Naive thymus-derived CD4-positive, alpha-beta T cell (primary cell): ENCODE measurements at regions of chr7 and their contacts with region 1.

Region 1: DNA sequence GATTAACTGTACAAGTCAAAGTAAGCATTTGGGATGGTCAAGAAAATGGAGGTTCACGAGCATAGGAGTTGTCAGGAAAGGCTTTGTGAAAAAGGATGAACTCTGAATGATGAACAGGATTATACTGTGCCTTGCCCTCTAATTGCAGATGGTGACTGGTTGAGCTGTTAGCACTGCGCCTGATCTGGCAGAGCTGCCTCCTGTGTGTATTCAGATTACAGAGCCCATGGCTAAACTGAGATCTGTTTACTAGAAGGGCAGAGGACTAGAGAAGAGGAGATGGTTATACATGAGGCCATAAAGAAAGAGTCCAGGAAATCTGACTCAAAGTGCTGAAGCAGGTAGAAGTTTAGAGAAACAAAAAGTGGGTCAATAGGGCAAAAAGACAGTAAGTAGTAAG is 29.7 kb downstream of the LRRC72 start:
- DNase-seq: no peak
- ATAC-seq: no peak
- H3K4me3 ChIP-seq: no peak overlapping the region
- H3K4me3 Mint-ChIP-seq: no peak overlapping the region
- H3K27ac ChIP-seq: no peak overlapping the region
- H3K27ac Mint-ChIP-seq: no peak overlapping the region
- H3K4me1 ChIP-seq: no peaks in the 10 kb centered on the region
- H3K4me1 Mint-ChIP-seq: no peaks in the 10 kb centered on the region
- H3K27me3 ChIP-seq: no peaks in the 10 kb centered on the region
- H3K27me3 Mint-ChIP-seq: peaks cover 0 to 7% (median 5%) of the 10 kb centered on the region in 5 donors

Region 2: DNA sequence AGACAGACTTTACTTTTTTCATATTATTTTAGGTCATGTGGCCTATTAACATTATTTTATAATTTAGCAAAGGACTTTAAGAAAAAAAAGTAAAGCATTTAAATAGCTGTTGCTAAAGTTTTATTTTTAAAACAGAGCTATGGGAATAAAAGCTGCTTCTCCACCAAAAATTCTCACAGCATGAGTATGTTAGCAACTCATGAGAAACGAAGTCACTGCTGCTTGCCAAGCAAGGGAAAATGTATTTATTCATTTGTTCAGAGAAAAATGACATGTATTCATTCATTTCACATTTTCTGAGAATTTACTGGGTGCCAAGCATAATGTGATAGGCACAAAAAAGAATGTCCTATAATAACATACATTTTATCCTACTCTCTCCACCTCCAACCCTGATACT is 24.7 kb before region 1 on chr7:
- CTCF ChIA-PET with region 1: no interaction called
- POLR2A ChIA-PET with region 1: no interaction called
- intact Hi-C with region 1: loop called in 1 of 2 experiments (anchors 2 kb)
- DNase-seq: no peak
- ATAC-seq: no peak
- H3K4me3 ChIP-seq: no peak overlapping the region
- H3K4me3 Mint-ChIP-seq: no peak overlapping the region
- H3K27ac ChIP-seq: no peak overlapping the region
- H3K27ac Mint-ChIP-seq: no peak overlapping the region
- H3K4me1 ChIP-seq: no peaks in the 10 kb centered on the region
- H3K4me1 Mint-ChIP-seq: no peaks in the 10 kb centered on the region
- H3K27me3 ChIP-seq: no peaks in the 10 kb centered on the region
- H3K27me3 Mint-ChIP-seq: peaks cover 0 to 7% (median 0%) of the 10 kb centered on the region in 5 donors

Region 3: DNA sequence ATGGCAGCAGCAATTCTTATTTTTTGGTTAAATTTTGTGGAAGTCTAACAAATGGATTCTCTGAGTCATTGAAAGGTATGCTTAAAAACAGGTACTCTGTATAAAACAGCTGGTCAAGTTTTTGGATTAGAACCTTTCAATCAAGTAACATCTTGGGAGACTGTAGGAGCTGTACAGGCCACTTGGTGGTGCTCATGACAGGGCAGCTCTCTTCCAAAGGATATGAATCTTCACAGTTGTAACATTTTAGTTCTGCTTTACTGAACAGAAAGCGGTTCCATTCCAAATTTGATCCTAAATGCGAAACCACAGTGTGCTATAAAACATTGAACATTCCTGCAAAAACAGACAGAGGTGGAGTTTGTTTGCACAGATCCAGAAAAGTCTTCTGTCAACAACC is 369.9 kb after region 1 on chr7:
- CTCF ChIA-PET with region 1: no interaction called
- POLR2A ChIA-PET with region 1: no interaction called
- intact Hi-C with region 1: no loop called
- DNase-seq: no peak
- ATAC-seq: peak; percentile 78
- H3K4me3 ChIP-seq: no peak overlapping the region
- H3K4me3 Mint-ChIP-seq: no peak overlapping the region
- H3K27ac ChIP-seq: no peak overlapping the region
- H3K27ac Mint-ChIP-seq: peak overlapping the region in 1 of 9 donors; percentile 44
- H3K4me1 ChIP-seq: peaks cover 0 to 12% of the 10 kb centered on the region in 2 donors
- H3K4me1 Mint-ChIP-seq: peaks cover 6 to 52% (median 32%) of the 10 kb centered on the region in 7 donors
- H3K27me3 ChIP-seq: no peaks in the 10 kb centered on the region
- H3K27me3 Mint-ChIP-seq: peaks cover 0 to 5% (median 0%) of the 10 kb centered on the region in 5 donors

Region 4: DNA sequence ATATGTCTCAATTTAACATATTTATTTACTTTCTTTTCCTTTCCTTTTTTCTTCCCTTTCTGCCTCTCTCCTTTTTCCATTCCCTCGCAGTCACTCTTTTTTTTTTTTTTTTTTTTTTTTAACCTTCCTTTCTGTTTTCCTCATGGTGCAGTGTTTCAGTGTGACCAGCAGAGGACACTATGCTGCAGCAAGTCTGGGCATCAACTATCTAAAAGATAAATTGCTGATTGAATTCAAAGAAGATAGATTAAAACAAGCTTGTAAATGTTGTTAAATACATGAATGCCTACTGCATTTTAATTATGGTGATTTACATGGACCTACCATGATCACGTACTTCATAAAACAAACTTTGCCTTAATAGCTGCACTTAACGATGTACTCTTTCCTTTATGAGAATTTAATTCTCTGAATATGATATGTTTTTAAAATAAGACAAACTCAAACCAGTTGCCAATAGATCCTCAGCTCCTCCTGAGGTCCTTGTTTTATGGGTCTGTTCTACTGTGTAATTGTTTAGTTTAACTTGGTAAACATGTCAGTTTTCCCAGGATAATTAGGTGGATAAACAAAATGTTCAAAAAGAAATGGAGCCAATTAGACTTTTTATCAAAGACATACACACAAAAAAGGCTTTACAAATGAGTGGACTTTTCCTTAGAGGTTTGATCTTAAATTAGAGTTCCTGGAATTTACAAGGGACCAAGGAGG is 426.4 kb after region 1 on chr7:
- CTCF ChIA-PET with region 1: no interaction called
- POLR2A ChIA-PET with region 1: no interaction called
- intact Hi-C with region 1: no loop called
- DNase-seq: peak in 6 of 9 donors; percentile 4 to 55 (median 34)
- ATAC-seq: peak; percentile 74
- H3K4me3 ChIP-seq: no peak overlapping the region
- H3K4me3 Mint-ChIP-seq: no peak overlapping the region
- H3K27ac ChIP-seq: no peak overlapping the region
- H3K27ac Mint-ChIP-seq: peak overlapping the region in 3 of 9 donors; percentile 1 to 51 (median 26)
- H3K4me1 ChIP-seq: no peaks in the 10 kb centered on the region
- H3K4me1 Mint-ChIP-seq: peaks cover 0 to 7% (median 4%) of the 10 kb centered on the region in 7 donors
- H3K27me3 ChIP-seq: peaks cover 0 to 5% of the 10 kb centered on the region in 2 donors
- H3K27me3 Mint-ChIP-seq: peaks cover 14 to 60% (median 25%) of the 10 kb centered on the region in 5 donors